ENCODE measurements at regions of chr3 and their contacts with region 1.

Region 1: GRCh38 chr3:168154114-168154513 is 58.4 kb upstream of the GOLIM4 start:
- DNase-seq: no peak
- ATAC-seq: no peak
- H3K4me3 ChIP-seq: no peak overlapping the region
- H3K27ac ChIP-seq: no peak overlapping the region
- H3K4me1 ChIP-seq: no peaks in the 10 kb centered on the region
- H3K27me3 ChIP-seq: peaks cover 4% of the 10 kb centered on the region; the same call in 1 of the 2 replicates
- CTCF ChIP-seq: no peak
- POLR2A ChIP-seq: no peak
- RAD21 ChIP-seq: no peak

Region 2: GRCh38 chr3:168113848-168114247 is 40.3 kb before region 1 on chr3:
- CTCF ChIA-PET with region 1: no interaction called
- POLR2A ChIA-PET with region 1: no interaction called
- dilution Hi-C with region 1: no loop called
- in situ Hi-C with region 1: loop called (anchors 5 kb)
- intact Hi-C with region 1: no loop called
- DNase-seq: no peak
- ATAC-seq: no peak
- H3K4me3 ChIP-seq: no peak overlapping the region
- H3K27ac ChIP-seq: no peak overlapping the region
- H3K4me1 ChIP-seq: peaks cover 5% of the 10 kb centered on the region
- H3K27me3 ChIP-seq: no peaks in the 10 kb centered on the region
- CTCF ChIP-seq: no peak
- POLR2A ChIP-seq: no peak
- RAD21 ChIP-seq: no peak